Left colon (tissue), 2 donors: ENCODE measurements at regions of chr7 and their contacts with region 1.

Region 1: DNA sequence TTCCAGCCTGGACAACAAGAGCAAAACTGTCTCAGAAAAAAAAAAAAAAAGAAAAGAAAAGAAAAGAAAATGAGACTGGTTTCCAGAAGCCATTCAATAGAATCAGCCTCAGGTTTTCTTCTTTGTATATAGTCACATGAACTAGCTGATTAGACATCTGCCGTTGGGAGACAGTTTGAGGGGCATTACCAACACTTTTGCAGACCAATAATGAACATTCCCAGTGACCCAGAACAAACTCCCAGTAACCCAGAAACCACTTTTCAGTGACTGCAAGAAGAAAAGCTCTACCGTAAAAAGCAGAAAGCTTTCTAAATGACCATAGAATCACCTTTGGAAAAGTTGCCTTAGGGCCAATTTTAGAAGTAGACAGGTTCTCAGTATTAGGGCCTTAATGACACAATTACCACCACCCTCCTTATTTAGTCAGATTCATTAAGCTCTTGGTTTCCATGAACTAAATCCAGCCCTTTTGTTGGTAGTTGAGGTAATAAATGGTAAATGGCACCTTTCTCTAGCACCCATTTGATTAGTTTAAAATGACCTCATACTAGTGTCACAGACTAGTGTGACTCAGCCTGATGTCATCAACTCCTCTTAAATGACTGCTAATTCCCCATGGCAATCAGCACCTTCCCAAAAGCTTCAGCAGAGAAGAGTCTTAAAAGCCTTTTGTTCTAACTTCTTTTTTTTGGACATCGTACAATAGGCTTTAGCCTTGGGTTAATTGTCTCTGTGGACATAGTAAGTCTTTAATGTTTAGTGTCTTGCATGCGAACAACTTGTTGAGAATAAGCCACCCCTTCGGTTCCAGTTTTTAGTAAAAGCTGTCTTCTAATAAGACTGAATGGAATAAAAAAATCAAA is 33.6 kb upstream of the XRCC2 start:
- DNase-seq: no peak
- ATAC-seq: no peak

Region 2: GRCh38 chr7:152081088-152081487 is 628.4 kb before region 1 on chr7:
- intact Hi-C with region 1: no loop called
- DNase-seq: no peak
- ATAC-seq: peak; percentile 72

Region 3: GRCh38 chr7:152336754-152337368 is 372.7 kb before region 1 on chr7:
- intact Hi-C with region 1: loop called in 1 of 2 experiments (anchors 10 kb)
- DNase-seq: no peak
- ATAC-seq: peak; percentile 86

Region 4: DNA sequence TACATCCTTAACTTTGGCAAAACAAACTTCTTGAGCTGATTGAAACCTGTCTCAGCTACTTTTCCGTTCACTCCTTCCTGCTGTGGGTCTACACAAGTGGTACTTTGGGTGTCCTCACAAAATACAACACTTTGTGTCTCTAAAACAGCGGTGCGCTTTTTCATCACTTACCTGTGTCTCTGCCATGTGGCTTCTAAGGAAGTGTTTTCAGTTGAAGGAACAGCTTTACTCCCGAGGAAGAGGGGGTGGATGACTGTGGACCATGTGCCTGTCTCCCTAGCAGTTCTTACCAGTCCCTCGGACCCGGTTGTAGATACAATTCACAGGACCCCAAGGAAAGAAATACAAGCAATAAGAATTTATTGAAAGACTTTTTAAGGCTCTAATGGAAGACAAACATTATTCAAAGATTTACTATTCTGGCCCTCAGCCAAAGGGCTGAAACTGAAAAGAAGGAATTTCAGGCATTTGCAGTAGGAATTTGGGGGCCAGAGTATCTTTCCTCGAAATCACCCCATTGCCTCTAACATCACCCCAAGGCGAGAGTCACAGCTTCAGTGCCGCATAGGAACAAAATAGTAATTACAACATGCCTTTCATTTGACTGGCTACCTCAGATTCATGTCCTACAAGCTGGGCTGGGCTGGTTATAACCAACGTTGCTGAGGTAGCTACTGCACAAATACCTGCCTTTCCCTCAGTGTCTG is 296.4 kb after region 1 on chr7:
- intact Hi-C with region 1: no loop called
- DNase-seq: no peak
- ATAC-seq: no peak